Motor neuron (in vitro differentiated cells): ENCODE measurements at regions of chr2 and their contacts with region 1.

Region 1: DNA sequence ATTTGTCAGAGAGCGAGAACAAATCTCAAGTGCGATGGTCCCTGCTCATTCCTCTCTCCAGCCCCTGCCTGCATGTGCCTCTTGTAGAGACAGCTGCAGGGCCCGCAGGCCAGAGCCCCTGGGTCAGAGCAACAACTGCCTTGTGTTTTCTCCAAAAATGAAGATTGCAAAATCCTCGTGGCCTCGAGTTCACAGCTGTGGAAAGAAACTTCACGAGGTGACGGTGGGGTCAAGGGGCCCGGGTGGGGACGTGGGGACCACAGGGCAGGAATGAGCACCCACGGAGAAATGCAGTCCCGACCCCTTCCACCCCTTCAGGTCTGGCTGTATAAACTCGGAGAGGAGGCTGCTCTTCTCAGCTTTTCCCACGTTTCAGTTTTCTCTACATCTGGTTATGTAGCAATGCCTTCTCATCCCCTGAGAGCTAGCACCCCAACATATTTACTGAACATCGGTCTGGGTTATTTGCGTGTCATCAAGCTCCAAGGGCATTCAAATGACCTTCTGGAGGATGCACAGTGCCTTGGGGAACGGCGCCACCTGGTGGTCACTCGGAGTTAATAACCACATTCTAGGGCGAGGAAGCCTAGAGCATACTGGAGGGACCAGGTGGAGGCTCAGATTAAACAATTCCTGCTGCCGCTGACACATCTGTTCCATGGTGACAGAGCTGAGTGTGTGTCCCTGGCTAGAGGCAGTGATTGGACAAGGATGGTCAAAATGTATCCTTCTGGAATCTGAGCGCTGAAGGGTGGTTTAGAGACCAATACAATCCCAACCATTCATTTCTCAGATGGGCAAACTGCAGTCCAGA is 91.4 kb upstream of the CYRIA start:
- ATAC-seq: peak; percentile 90 to 100 (median 98)
- H3K4me3 ChIP-seq: no peak overlapping the region
- H3K27ac ChIP-seq: no peak overlapping the region
- H3K4me1 ChIP-seq: peaks cover 4% of the 10 kb centered on the region in 2 donors

Region 2: GRCh38 chr2:15939854-15940660 is 817.0 kb before region 1 on chr2 and contains the start of gene MYCN:
- in situ Hi-C with region 1: loop called in 1 of 9 experiments (anchors 25 kb)
- ATAC-seq: peak; percentile 13 to 71 (median 65)
- H3K4me3 ChIP-seq: peak within 1 kb of the TSS; percentile 62 to 84 (median 73)
- H3K27ac ChIP-seq: peak within 1 kb of the TSS; percentile 69
- H3K4me1 ChIP-seq: peaks cover 7 to 12% of the 10 kb centered on the region in 2 donors
- total RNA-seq, gene MYCN: 0.31 to 55.9 (median 17.9) TPM in 6 of 8 experiments, not detected in the others

Region 3: DNA sequence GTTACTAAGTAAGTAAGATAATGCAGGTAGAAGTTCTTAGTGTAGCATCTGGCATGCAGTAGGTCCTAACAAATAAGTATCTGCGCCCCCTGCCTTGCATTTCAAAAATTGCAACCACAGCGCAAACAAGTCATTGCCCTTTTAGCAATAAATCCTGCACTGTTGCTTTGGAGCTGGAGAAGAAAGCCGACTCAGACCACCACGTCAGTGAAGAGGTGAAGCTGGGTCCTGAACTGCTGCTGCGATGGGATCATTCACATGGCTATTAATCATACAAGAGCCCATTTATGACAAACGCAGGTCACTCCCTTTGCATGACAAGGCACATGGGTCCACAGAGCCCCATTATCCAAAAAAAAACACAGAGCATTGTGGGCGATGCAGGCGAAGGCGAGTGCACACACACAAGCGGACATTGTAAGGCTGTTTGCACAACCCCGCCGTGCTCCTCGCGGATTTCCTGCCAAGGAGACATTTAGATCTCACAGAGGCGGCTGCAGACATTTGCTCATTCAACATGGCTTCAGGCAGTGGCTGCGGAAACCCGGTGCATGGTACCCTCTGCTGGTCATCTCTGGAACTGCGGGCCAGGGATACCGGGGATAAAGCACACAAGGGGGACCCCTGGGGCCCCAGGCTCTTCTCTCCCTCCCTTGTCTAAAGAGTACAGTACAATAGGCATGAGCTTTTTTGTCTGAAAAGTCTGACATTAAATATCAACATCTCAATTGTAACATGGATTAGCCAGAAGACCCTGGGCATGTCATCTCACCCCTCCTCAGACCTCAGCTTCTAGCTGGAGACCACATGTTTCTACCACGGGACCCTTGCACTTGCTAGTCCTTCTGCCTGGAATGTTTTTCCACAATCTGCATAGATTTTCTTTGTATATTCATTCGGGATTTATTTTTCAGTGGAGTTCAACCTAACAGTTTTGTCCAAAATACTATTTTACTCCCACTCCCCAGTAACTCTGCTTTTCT is 148.1 kb before region 1 on chr2:
- in situ Hi-C with region 1: loop called in 6 of 9 experiments (anchors 5 to 10 kb)
- ATAC-seq: peak; percentile 82 to 92 (median 90)
- H3K4me3 ChIP-seq: peak overlapping the region; percentile 22 to 32 (median 30)
- H3K27ac ChIP-seq: peak overlapping the region; percentile 60 to 78
- H3K4me1 ChIP-seq: peaks cover 6 to 14% of the 10 kb centered on the region in 2 donors

Region 4: DNA sequence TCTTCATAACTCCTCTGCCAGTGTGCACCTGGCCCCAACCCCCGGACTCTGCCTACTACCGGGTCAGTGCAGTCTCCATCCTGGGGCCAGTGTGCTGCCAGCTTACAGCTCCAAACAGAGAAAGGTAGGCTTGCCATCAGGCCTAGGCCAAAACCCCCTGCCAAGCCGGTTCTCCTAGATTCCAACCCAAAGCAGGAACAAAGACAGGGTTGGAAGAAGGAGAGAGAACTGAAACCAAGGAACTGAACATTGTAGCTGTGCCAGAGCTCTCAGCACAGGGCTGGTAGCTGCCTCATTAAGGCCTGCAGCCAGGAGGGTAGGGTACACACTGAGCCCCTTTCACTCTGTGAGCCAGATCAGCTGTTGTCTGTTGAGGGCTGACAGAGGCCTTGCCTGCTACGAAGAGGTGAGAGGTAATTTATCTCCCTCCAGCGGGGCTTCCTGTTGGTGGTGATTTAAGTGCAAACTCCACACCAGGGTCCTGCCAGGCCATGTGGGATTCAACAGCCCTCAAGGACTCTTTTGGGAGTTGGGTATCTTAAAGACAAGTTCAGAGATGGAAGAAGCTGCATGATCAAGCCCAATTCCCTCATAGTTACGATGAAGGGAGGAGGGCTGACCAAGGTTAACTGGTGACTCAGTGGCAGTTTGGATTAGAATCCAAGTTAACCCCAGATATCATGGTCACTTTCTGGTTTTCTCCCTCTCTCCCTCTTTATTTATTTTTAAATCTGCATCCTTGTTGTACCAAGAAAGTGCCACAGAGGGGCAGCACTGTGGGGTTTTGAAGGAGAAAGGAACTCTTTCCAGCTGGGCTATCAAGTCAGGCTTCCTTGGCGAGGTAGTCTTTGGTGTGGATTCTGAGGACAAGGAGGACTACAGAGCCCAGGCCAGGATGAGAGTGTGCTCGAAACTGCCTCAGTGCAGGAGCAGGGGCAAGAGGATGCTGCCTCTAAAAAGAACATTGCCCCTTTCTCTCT is 139.5 kb before region 1 on chr2:
- in situ Hi-C with region 1: loop called in 7 of 9 experiments (anchors 5 to 10 kb)
- ATAC-seq: peak in 2 of 8 experiments; percentile 33 to 39
- H3K4me3 ChIP-seq: no peak overlapping the region
- H3K27ac ChIP-seq: no peak overlapping the region
- H3K4me1 ChIP-seq: no peaks in the 10 kb centered on the region

Region 5: DNA sequence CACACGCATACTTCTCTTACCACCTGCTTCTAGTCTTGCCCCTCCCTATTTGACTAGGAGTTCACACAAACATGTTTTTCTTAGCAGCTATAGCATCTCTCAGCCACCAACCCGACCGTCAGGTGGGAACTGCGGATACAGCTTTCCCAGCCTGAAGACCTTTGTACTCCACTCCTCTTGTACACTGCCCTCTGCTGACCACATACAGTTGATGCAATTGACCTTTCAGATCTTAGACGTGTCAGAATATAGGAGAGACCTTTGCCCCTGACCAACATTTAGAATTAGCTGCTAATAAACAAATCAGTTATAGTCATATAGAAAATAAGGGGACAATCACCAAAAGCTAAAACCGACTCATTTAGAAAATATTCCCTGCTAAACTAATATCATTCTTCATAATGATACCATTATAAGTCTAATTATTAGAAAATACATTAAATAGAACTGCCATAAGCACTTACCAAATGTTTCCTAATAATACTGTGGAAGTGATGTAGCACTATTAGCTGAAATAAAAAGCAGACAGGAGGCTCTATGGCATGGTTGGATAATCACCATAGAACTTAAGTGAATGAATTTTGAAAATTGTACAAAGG is 552.8 kb after region 1 on chr2:
- in situ Hi-C with region 1: loop called in 1 of 9 experiments (anchors 25 kb)
- ATAC-seq: peak; percentile 46 to 90 (median 54)
- H3K4me3 ChIP-seq: no peak overlapping the region
- H3K27ac ChIP-seq: no peak overlapping the region
- H3K4me1 ChIP-seq: peaks cover 6% of the 10 kb centered on the region in 2 donors

Region 6: GRCh38 chr2:17658251-17658843 is 901.3 kb after region 1 on chr2:
- in situ Hi-C with region 1: loop called in 2 of 9 experiments (anchors 25 kb)
- ATAC-seq: peak in 1 of 8 experiments; percentile 30
- H3K4me3 ChIP-seq: no peak overlapping the region
- H3K27ac ChIP-seq: no peak overlapping the region
- H3K4me1 ChIP-seq: no peaks in the 10 kb centered on the region